Transverse colon (tissue), 4 donors: ENCODE measurements at regions of chr1 and their contacts with region 1.

Region 1: GRCh38 chr1:59446257-59446901 is 149.5 kb downstream of the FGGY start:
- DNase-seq: peak; percentile 10
- H3K4me3 ChIP-seq: no peak overlapping the region
- H3K27ac ChIP-seq: peak overlapping the region; percentile 60 to 78 (median 67)
- H3K4me1 ChIP-seq: peaks cover 4 to 21% (median 9%) of the 10 kb centered on the region in 4 donors
- H3K27me3 ChIP-seq: no peaks in the 10 kb centered on the region
- CTCF ChIP-seq: no peak
- EP300 ChIP-seq: peak; percentile 42
- POLR2A ChIP-seq: no peak

Region 2: DNA sequence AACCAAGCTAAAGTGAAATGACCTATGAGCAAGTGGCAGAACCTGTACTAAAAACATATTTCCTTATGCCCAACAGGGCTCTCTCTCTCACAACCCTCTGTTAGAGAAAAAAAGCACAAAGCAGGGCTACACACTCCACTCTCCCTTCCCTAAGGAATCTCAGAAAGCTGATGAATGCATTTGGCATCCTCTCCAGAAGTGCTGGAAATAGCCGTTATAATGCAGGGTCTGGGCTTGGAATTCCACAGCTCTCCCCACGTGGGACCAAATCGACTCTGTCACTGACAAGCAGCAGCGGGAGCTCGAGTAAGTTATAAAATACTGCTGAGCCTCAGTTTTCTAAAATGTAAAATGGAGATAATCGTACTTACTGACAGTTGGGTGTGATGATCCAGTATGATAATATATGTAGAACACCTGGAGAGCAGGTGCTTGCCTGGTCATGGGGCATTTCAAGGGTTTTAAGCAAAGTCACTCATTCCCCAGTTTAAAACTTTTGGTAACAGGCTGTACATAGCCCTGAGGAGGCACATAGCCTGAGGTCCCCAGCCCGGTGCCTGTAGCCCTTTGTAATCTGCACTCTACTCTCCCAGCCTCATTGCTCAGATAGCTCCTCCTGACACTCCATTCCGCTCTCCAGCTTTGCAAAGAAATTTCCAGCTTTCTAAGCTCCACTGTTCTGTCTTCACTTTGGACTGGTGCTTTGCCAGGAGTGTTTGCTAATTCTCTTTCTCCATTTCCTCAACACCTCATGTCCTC is 1847.0 kb before region 1 on chr1:
- in situ Hi-C with region 1: no loop called
- intact Hi-C with region 1: no loop called
- DNase-seq: no peak
- H3K4me3 ChIP-seq: no peak overlapping the region
- H3K27ac ChIP-seq: no peak overlapping the region
- H3K4me1 ChIP-seq: no peaks in the 10 kb centered on the region
- H3K27me3 ChIP-seq: no peaks in the 10 kb centered on the region
- CTCF ChIP-seq: no peak
- EP300 ChIP-seq: no peak
- POLR2A ChIP-seq: no peak

Region 3: DNA sequence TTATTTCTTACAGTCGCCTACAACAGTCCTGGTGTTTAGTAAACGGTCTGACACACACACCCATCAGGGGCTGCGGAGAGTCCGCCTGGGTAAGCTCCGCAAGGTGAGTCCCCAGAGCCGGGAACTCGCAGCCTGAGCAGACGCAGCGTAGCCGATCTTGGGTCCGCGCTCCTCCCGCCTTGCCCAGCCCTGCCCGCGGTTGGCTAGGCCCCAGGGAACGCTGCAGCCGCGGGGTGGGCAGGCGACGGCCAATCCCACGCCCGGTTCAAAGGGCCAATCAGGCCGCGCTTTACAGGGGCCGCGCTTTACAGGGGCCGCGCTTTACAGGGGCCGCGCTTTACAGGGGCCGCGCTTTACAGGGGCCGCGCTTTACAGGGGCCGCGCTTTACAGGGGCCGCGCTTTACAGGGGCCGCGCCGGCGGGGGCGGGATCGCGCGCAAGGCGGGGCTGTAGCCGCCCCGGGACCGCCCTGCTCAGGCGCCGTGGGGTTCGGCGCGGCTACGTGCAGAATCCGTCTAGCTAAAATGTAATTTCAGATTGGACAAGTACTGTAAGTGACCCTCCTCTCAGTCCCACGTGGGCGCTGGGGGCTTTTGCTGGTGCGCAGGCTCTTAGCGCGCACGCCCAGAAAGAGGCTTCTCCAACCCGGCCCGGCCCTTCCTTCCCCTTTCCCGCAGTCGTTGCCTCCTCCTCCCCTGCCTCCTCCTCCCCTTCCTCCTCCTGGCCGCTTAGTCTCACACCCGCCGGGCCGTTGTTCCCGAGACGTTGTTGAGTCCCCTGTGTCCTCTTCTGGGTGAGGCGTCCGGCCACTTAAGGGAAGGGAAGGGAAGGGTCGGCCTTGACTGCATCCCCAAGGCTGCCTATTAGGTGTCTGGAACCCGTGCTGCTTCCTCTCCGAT is 149.8 kb before region 1 on chr1 and contains the start of gene FGGY:
- in situ Hi-C with region 1: no loop called
- intact Hi-C with region 1: loop called (anchors 10 kb)
- DNase-seq: peak; percentile 97
- H3K4me3 ChIP-seq: peak within 1 kb of the TSS; percentile 34 to 57 (median 41)
- H3K27ac ChIP-seq: peak within 1 kb of the TSS; percentile 92 to 98 (median 95)
- H3K4me1 ChIP-seq: peaks cover 11 to 28% (median 14%) of the 10 kb centered on the region in 4 donors
- H3K27me3 ChIP-seq: no peaks in the 10 kb centered on the region
- CTCF ChIP-seq: peak in 1 of 5 experiments; percentile 18
- EP300 ChIP-seq: no peak
- POLR2A ChIP-seq: peak; percentile 92
- total RNA-seq, gene FGGY: 18.2 to 97.7 (median 27.1) TPM

Region 4: GRCh38 chr1:59418363-59419144 is 27.8 kb before region 1 on chr1:
- in situ Hi-C with region 1: no loop called
- intact Hi-C with region 1: loop called (anchors 1 kb)
- DNase-seq: no peak
- H3K4me3 ChIP-seq: no peak overlapping the region
- H3K27ac ChIP-seq: no peak overlapping the region
- H3K4me1 ChIP-seq: peaks cover 0 to 31% (median 7%) of the 10 kb centered on the region in 4 donors
- H3K27me3 ChIP-seq: no peaks in the 10 kb centered on the region
- CTCF ChIP-seq: no peak
- EP300 ChIP-seq: no peak
- POLR2A ChIP-seq: no peak

Region 5: GRCh38 chr1:59678493-59679228 is 232.3 kb after region 1 on chr1:
- in situ Hi-C with region 1: no loop called
- intact Hi-C with region 1: loop called (anchors 10 kb)
- DNase-seq: no peak
- H3K4me3 ChIP-seq: no peak overlapping the region
- H3K27ac ChIP-seq: peak overlapping the region in 2 of 4 donors; percentile 6 to 39
- H3K4me1 ChIP-seq: peaks cover 3 to 33% (median 16%) of the 10 kb centered on the region in 4 donors
- H3K27me3 ChIP-seq: no peaks in the 10 kb centered on the region
- CTCF ChIP-seq: no peak
- EP300 ChIP-seq: no peak
- POLR2A ChIP-seq: no peak

Region 6: GRCh38 chr1:60017508-60018205 is 571.3 kb after region 1 on chr1:
- in situ Hi-C with region 1: no loop called
- intact Hi-C with region 1: no loop called
- DNase-seq: no peak
- H3K4me3 ChIP-seq: no peak overlapping the region
- H3K27ac ChIP-seq: no peak overlapping the region
- H3K4me1 ChIP-seq: no peaks in the 10 kb centered on the region
- H3K27me3 ChIP-seq: no peaks in the 10 kb centered on the region
- CTCF ChIP-seq: no peak
- EP300 ChIP-seq: no peak
- POLR2A ChIP-seq: no peak